BJ (cell line): ENCODE measurements at regions of chr19 and their contacts with region 1.

Region 1: GRCh38 chr19:49590071-49590970 is 661 bp upstream of the PRR12 start:
- DNase-seq: peak; percentile 75
- H3K4me3 ChIP-seq: peak overlapping the region; percentile 53
- H3K27me3 ChIP-seq: no peaks in the 10 kb centered on the region
- CTCF ChIP-seq: peak; percentile 19; the same call in 1 of the 2 replicates

Region 2: DNA sequence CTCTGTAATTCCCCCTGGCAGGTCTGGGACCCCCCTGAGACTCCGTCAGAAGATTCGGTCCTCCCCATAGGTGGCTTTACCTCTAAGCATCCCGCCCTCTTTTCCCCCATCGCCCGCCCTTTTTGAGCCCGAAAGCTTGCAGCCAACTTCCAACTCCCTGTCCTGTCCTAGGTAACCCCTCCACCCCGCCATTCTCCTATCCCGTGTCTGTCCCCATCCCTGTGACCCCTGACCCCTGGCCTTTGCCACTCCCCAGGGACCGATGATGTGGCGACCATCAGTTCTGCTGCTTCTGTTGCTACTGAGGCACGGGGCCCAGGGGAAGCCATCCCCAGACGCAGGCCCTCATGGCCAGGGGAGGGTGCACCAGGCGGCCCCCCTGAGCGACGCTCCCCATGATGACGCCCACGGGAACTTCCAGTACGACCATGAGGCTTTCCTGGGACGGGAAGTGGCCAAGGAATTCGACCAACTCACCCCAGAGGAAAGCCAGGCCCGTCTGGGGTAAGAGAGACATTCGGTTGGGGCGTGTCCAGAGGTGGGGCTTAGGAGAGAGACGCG is 62.0 kb before region 1 on chr19:
- CTCF ChIA-PET with region 1: no interaction called
- POLR2A ChIA-PET with region 1: interaction called, 13 read pairs
- DNase-seq: no peak
- H3K4me3 ChIP-seq: peak overlapping the region; percentile 73
- H3K27me3 ChIP-seq: no peaks in the 10 kb centered on the region
- CTCF ChIP-seq: no peak

Region 3: GRCh38 chr19:49614096-49614833 is 23.9 kb after region 1 on chr19:
- CTCF ChIA-PET with region 1: no interaction called
- POLR2A ChIA-PET with region 1: no interaction called
- DNase-seq: peak; percentile 77
- H3K4me3 ChIP-seq: no peak overlapping the region
- H3K27me3 ChIP-seq: no peaks in the 10 kb centered on the region
- CTCF ChIP-seq: no peak; the same call in 1 of the 2 replicates